Vagina (tissue), 2 donors: ENCODE measurements at regions of chr7 and their contacts with region 1.

Region 1: DNA sequence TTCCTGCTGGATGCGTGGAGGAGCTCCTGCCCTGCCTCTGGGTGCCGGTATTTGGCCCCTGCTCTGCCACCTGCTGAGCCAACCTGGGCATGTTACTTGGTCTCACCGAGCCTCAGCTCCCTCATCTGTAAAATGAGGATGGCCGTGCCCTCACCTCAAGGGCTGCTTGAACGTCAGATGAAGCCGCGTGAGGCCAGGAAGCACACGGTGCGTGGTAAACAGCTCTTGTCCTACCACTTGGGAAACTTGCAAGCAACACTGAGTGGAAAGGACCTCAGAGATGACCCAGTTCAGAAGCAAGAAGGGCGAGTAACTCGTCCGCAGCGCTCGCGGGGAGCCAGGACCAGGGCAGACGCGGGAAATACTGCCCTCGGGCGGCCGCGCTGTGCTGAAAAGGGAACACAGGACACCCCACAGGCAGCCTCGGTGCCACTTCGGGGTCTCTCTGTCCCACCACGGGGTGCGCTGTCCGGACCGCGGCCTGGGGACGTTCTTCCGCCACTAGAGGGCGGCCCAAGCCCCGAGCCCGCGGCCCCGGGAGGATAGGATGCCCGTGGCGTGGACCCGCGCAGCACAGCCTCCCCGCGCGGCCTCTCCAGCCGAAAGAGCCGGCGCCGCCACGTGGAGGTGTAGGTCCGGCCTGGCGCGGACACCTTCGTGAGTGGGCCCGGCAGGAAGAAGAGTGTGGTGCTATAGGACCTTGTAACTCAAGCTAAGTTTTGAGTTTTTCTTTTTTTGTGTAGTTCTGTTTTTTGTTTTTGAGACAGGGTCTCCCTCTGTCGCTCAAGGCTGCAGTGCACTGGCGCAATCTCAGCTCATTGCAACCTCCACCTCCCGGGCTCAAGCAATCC is 94.1 kb downstream of the PRKAG2 start:
- DNase-seq: no peak
- H3K4me3 ChIP-seq: peak overlapping the region; percentile 29 to 39
- H3K27ac ChIP-seq: peak overlapping the region; percentile 15
- H3K4me1 ChIP-seq: peaks cover 12% of the 10 kb centered on the region
- H3K27me3 ChIP-seq: no peaks in the 10 kb centered on the region
- CTCF ChIP-seq: peak; percentile 60 to 93 (median 93)
- POLR2A ChIP-seq: no peak

Region 2: DNA sequence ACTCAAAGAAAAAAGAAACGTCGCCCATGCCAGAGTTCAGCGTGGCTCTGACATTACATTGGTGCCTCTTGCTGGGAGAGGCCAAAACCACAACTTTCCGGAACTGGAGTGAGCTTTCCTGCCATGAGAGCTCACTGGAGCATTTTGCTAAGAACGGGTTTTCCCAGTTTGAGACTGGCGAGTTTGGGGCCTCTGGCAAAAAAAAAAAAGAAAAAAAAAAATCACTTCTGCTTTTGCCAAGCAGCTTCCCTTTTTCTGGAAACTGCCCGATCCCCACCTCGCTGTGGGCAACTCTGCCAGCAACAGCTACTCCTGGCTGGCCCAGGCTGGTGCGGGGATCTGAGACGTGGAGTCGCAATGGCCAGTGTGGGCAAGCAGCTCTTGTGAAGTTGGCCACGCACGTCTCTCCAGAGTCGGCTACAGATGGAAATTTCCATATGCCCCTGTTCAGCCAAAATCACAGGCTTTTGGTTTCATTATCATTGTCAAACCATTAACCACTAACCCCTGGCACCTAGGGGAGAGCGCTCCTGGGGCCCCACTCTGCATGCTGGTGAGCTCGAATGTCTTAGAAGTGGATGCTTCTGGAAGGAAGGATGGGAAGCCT is 68.4 kb after region 1 on chr7:
- intact Hi-C with region 1: loop called (anchors 5 kb)
- DNase-seq: no peak
- H3K4me3 ChIP-seq: peak overlapping the region in 1 of 2 donors; percentile 17
- H3K27ac ChIP-seq: peak overlapping the region; percentile 35
- H3K4me1 ChIP-seq: peaks cover 31% of the 10 kb centered on the region
- H3K27me3 ChIP-seq: no peaks in the 10 kb centered on the region
- CTCF ChIP-seq: no peak
- POLR2A ChIP-seq: no peak

Region 3: DNA sequence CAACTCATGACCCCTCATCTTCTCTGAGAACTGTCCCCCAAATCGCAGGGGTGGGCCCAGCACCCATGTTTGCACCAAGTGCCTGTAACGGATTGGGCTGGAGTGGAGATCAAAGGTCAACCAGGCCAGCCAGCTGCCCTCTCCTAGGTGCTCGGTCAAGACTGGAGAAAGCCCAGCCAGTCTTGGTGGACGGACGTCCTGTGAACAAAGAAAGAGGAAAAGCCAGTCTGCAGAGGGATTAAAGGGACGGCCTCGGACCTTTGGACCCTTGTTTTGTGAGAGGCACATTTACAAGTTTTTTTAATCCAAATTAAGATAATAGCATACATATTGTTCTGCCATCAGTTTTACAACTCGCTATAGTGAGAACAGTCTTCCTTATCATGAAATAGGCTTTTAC is 141.7 kb after region 1 on chr7:
- intact Hi-C with region 1: no loop called
- DNase-seq: no peak
- H3K4me3 ChIP-seq: no peak overlapping the region
- H3K27ac ChIP-seq: no peak overlapping the region
- H3K4me1 ChIP-seq: peaks cover 6% of the 10 kb centered on the region
- H3K27me3 ChIP-seq: no peaks in the 10 kb centered on the region
- CTCF ChIP-seq: no peak
- POLR2A ChIP-seq: no peak

Region 4: GRCh38 chr7:151987748-151988529 is 205.1 kb after region 1 on chr7:
- intact Hi-C with region 1: loop called (anchors 10 kb)
- DNase-seq: no peak
- H3K4me3 ChIP-seq: no peak overlapping the region
- H3K27ac ChIP-seq: no peak overlapping the region
- H3K4me1 ChIP-seq: no peaks in the 10 kb centered on the region
- H3K27me3 ChIP-seq: no peaks in the 10 kb centered on the region
- CTCF ChIP-seq: no peak
- POLR2A ChIP-seq: no peak